Posterior vena cava (tissue), 2 donors: ENCODE measurements at regions of chr9 and their contacts with region 1.

Region 1: GRCh38 chr9:113807173-113808061 is 68.7 kb upstream of the ZNF618 start:
- DNase-seq: peak; percentile 52

Region 2: GRCh38 chr9:112322701-112323377 is 1484.6 kb before region 1 on chr9:
- intact Hi-C with region 1: loop called in 1 of 2 experiments (anchors 5 kb)
- DNase-seq: no peak

Region 3: GRCh38 chr9:113139225-113139829 is 668.1 kb before region 1 on chr9:
- intact Hi-C with region 1: loop called in 1 of 2 experiments (anchors 5 kb)
- DNase-seq: no peak

Region 4: GRCh38 chr9:114033397-114034103 is 226.1 kb after region 1 on chr9:
- intact Hi-C with region 1: loop called (anchors 5 kb)
- DNase-seq: peak; percentile 78

Region 5: DNA sequence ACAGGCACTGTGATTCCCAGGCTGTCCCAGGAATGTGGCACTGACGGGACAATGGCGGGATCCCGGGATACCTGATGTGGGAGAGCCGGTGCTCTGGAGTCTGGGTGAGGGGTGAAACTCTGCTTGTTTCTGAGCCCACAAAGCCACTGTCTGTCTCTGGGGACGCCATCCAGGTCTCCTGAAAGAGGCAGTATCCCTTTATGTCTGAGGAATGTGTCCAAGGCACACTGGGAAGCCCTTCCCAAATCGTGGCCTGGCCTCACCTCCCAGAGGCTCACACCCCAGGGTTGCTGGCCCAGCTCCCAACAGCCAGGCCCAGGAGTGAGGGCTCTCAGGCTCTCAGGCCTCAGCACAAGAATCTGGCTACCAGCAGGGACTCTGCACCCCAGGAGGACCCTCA is 549.4 kb after region 1 on chr9:
- intact Hi-C with region 1: loop called in 1 of 2 experiments (anchors 5 kb)
- DNase-seq: peak; percentile 68

Region 6: GRCh38 chr9:115008536-115009270 is 1201.3 kb after region 1 on chr9:
- intact Hi-C with region 1: no loop called
- DNase-seq: no peak